ENCODE measurements at regions of chr3 and their contacts with region 1.

Region 1: GRCh38 chr3:7707187-7707586 is 794.4 kb upstream of the LMCD1 start:
- DNase-seq: no peak
- ATAC-seq: no peak
- H3K4me3 ChIP-seq: no peak overlapping the region
- H3K27ac ChIP-seq: no peak overlapping the region
- H3K4me1 ChIP-seq: no peaks in the 10 kb centered on the region
- H3K27me3 ChIP-seq: no peaks in the 10 kb centered on the region
- CTCF ChIP-seq: no peak
- EP300 ChIP-seq: no peak
- POLR2A ChIP-seq: no peak
- RAD21 ChIP-seq: no peak

Region 2: GRCh38 chr3:7800006-7800780 is 93.0 kb after region 1 on chr3:
- CTCF ChIA-PET with region 1: no interaction called
- POLR2A ChIA-PET with region 1: no interaction called
- in situ Hi-C with region 1: loop called (anchors 25 kb)
- intact Hi-C with region 1: no loop called
- DNase-seq: no peak
- ATAC-seq: no peak
- H3K4me3 ChIP-seq: no peak overlapping the region
- H3K27ac ChIP-seq: no peak overlapping the region
- H3K4me1 ChIP-seq: no peaks in the 10 kb centered on the region
- H3K27me3 ChIP-seq: no peaks in the 10 kb centered on the region
- CTCF ChIP-seq: no peak
- EP300 ChIP-seq: no peak
- POLR2A ChIP-seq: no peak
- RAD21 ChIP-seq: no peak

Measured in HepG2 (cell line).